ENCODE measurements at regions of chr1 and their contacts with region 1.

Region 1: GRCh38 chr1:32255072-32256071 is 4.3 kb downstream of the LCK start:
- DNase-seq: peak; percentile 41
- H3K4me3 Mint-ChIP-seq: peak overlapping the region; percentile 74
- H3K27ac Mint-ChIP-seq: peak overlapping the region; percentile 87
- H3K4me1 Mint-ChIP-seq: peaks cover 46% of the 10 kb centered on the region
- H3K27me3 Mint-ChIP-seq: no peaks in the 10 kb centered on the region

Region 2: GRCh38 chr1:32215629-32216480 is 39.5 kb before region 1 on chr1:
- intact Hi-C with region 1: no loop called
- DNase-seq: peak; percentile 53
- H3K4me3 Mint-ChIP-seq: no peak overlapping the region
- H3K27ac Mint-ChIP-seq: peak overlapping the region; percentile 28
- H3K4me1 Mint-ChIP-seq: peaks cover 13% of the 10 kb centered on the region
- H3K27me3 Mint-ChIP-seq: no peaks in the 10 kb centered on the region

Region 3: GRCh38 chr1:32273388-32274208 is 18.2 kb after region 1 on chr1:
- intact Hi-C with region 1: loop called (anchors 2 kb)
- DNase-seq: peak; percentile 67
- H3K4me3 Mint-ChIP-seq: peak overlapping the region; percentile 57
- H3K27ac Mint-ChIP-seq: peak overlapping the region; percentile 88
- H3K4me1 Mint-ChIP-seq: peaks cover 49% of the 10 kb centered on the region
- H3K27me3 Mint-ChIP-seq: no peaks in the 10 kb centered on the region

Region 4: DNA sequence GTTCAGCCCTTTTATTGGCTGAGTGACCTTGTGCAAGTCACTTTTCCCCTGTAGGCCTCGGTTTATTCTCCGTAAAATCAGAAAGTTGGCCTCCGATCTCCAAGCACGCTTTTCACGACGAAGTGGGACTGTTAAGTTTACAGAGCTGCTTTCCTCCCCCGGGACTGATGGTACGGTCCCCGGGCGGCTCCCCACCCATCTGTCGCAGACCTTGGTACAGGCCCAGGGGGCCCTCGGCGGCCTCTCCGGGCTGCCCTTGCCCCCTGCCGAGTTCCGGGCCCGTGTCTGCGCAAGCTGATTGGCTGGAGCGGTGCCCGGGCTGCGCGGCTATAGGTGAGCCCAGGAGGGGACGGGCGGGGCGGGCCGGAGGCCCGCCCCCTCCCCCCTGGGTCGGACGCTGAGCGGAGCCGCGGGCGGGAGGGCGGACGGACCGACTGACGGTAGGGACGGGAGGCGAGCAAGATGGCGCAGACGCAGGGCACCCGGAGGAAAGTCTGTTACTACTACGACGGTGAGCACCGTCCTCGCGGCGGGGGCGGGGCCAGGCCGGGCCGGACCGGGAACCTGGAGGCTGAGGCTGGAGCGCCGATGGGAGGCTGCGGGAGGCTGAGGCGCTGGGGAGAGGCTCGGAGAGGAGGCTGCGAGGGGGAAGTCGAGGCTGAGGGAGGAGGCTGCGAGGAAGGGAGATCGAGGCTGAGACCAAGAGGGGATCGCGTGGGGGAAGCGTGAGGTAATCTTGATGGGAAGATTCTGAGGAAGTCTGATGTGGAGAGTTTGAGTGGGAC is 36.5 kb after region 1 on chr1 and contains the start of gene HDAC1:
- intact Hi-C with region 1: loop called (anchors 2 kb)
- DNase-seq: peak; percentile 96
- H3K4me3 Mint-ChIP-seq: peak within 1 kb of the TSS; percentile 94
- H3K27ac Mint-ChIP-seq: peak within 1 kb of the TSS; percentile 99
- H3K4me1 Mint-ChIP-seq: peaks cover 34% of the 10 kb centered on the region
- H3K27me3 Mint-ChIP-seq: no peaks in the 10 kb centered on the region
- total RNA-seq, gene HDAC1: 179 and 195 TPM in 2 replicates

Measured in activated T-helper 2 cell treated with anti-CD3 and anti-CD28 coated beads, Interferon-gamma antibody, Interleukin-2, Interleukin-4, amounts not matched to agents 10 μg/mL and 5 μg/mL and 100 μg/mL, durations not matched to agents 14 hours and 24 hours and 36 hours (primary cell).